ENCODE measurements at regions of chr2 and their contacts with region 1.

Region 1: GRCh38 chr2:162153608-162154224 is 1.7 kb upstream of the GCG start:
- DNase-seq: peak; percentile 67 to 78
- H3K4me3 ChIP-seq: no peak overlapping the region
- H3K4me3 Mint-ChIP-seq: no peak overlapping the region
- H3K27ac Mint-ChIP-seq: no peak overlapping the region
- H3K4me1 ChIP-seq: no peaks in the 10 kb centered on the region
- H3K4me1 Mint-ChIP-seq: no peaks in the 10 kb centered on the region
- H3K27me3 ChIP-seq: no peaks in the 10 kb centered on the region
- H3K27me3 Mint-ChIP-seq: peaks cover 7% of the 10 kb centered on the region
- CTCF ChIP-seq: peak; percentile 75 to 93

Region 2: GRCh38 chr2:161586517-161587167 is 567.1 kb before region 1 on chr2:
- CTCF ChIA-PET with region 1: no interaction called
- POLR2A ChIA-PET with region 1: no interaction called
- intact Hi-C with region 1: loop called (anchors 5 kb)
- DNase-seq: no peak
- H3K4me3 ChIP-seq: no peak overlapping the region
- H3K4me3 Mint-ChIP-seq: no peak overlapping the region
- H3K27ac Mint-ChIP-seq: no peak overlapping the region
- H3K4me1 ChIP-seq: no peaks in the 10 kb centered on the region
- H3K4me1 Mint-ChIP-seq: no peaks in the 10 kb centered on the region
- H3K27me3 ChIP-seq: no peaks in the 10 kb centered on the region
- H3K27me3 Mint-ChIP-seq: peaks cover 7% of the 10 kb centered on the region
- CTCF ChIP-seq: peak; percentile 54 to 66

Region 3: DNA sequence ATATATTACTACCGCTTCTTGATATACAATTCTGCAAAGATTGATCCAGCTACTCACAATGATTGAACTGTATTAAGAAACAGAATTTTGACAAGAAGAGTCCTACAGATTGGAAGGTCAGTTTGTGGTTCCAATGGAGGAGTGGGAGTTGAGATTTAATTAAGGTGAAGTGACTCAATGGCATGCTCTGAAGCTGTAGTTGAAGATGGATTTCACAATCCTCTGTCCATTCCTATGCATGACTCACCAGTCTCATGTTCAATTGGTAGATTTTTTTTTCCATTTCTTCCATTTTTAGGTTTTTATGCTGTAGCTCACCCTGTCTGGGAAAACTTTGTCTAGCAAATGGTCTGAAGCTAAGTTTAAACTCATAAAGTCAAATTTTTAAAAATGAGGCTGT is 163.0 kb before region 1 on chr2:
- CTCF ChIA-PET with region 1: no interaction called
- POLR2A ChIA-PET with region 1: no interaction called
- intact Hi-C with region 1: no loop called
- DNase-seq: peak in 1 of 2 experiments; percentile 14
- H3K4me3 ChIP-seq: no peak overlapping the region
- H3K4me3 Mint-ChIP-seq: no peak overlapping the region
- H3K27ac Mint-ChIP-seq: no peak overlapping the region
- H3K4me1 ChIP-seq: peaks cover 4% of the 10 kb centered on the region
- H3K4me1 Mint-ChIP-seq: peaks cover 4% of the 10 kb centered on the region
- H3K27me3 ChIP-seq: no peaks in the 10 kb centered on the region
- H3K27me3 Mint-ChIP-seq: no peaks in the 10 kb centered on the region
- CTCF ChIP-seq: no peak

Region 4: DNA sequence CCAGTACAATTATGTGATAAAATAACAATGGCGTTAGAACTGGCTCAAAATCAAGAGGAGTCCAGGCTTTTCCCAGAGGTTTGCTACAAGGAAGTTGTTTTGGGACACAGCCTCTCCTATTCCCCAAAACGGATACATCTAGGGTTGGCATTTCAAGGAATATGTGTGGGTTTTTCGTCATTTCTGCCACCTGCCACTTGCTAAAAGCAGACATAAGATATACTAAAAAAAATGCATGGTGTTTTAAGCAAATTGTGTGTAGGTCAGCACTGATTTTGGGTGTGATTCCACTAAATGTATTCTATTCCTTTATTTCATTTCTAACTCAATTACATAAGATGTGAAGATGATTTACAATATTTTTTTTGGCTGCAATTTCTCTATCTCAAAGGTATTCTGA is 34.7 kb after region 1 on chr2:
- CTCF ChIA-PET with region 1: no interaction called
- POLR2A ChIA-PET with region 1: no interaction called
- intact Hi-C with region 1: loop called (anchors 2 kb)
- DNase-seq: no peak
- H3K4me3 ChIP-seq: no peak overlapping the region
- H3K4me3 Mint-ChIP-seq: no peak overlapping the region
- H3K27ac Mint-ChIP-seq: no peak overlapping the region
- H3K4me1 ChIP-seq: peaks cover 3% of the 10 kb centered on the region; the same call in 1 of the 2 replicates
- H3K4me1 Mint-ChIP-seq: no peaks in the 10 kb centered on the region
- H3K27me3 ChIP-seq: no peaks in the 10 kb centered on the region; the same call in 1 of the 2 replicates
- H3K27me3 Mint-ChIP-seq: peaks cover 20% of the 10 kb centered on the region
- CTCF ChIP-seq: no peak

Region 5: GRCh38 chr2:162221064-162221463 is 67.3 kb after region 1 on chr2:
- CTCF ChIA-PET with region 1: no interaction called
- POLR2A ChIA-PET with region 1: no interaction called
- intact Hi-C with region 1: loop called (anchors 1 kb)
- DNase-seq: peak; percentile 61 to 81
- H3K4me3 ChIP-seq: no peak overlapping the region
- H3K4me3 Mint-ChIP-seq: no peak overlapping the region
- H3K27ac Mint-ChIP-seq: no peak overlapping the region
- H3K4me1 ChIP-seq: no peaks in the 10 kb centered on the region
- H3K4me1 Mint-ChIP-seq: no peaks in the 10 kb centered on the region
- H3K27me3 ChIP-seq: no peaks in the 10 kb centered on the region
- H3K27me3 Mint-ChIP-seq: peaks cover 15% of the 10 kb centered on the region
- CTCF ChIP-seq: peak; percentile 91 to 95

Region 6: DNA sequence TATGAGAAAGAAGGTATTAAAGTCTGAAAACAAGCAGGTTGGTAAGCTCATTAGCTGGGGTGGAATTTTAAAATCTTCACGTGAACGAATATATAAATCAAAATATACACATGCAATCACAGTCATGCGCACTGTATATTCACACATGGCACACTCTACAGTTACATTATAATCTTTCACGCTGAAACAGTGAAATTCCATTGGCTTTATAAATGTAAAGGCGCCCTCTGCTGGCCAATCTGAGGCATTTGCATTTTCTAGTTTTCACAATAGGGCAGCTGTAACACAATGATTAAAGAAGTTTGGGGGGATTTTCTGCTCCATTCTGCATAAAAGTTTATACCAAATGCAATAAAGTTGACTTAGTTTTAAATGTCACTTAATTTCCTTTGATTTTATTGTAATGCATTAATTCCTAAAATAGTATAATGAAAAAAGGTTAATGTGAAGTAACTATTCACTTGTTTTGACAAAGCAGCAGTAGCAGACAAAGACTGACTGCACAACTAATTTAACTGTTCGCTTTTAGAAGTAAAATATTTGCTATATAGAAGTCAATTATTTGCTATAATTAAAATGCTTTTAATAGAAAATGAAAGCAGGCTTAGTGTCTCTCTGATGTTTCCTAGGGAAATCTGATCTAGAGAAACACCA is 147.6 kb after region 1 on chr2:
- CTCF ChIA-PET with region 1: interaction called, 16 read pairs
- POLR2A ChIA-PET with region 1: no interaction called
- intact Hi-C with region 1: loop called (anchors 1 kb)
- DNase-seq: peak in 1 of 2 experiments; percentile 42
- H3K4me3 ChIP-seq: no peak overlapping the region
- H3K4me3 Mint-ChIP-seq: no peak overlapping the region
- H3K27ac Mint-ChIP-seq: no peak overlapping the region
- H3K4me1 ChIP-seq: no peaks in the 10 kb centered on the region
- H3K4me1 Mint-ChIP-seq: no peaks in the 10 kb centered on the region
- H3K27me3 ChIP-seq: no peaks in the 10 kb centered on the region
- H3K27me3 Mint-ChIP-seq: peaks cover 3% of the 10 kb centered on the region
- CTCF ChIP-seq: peak; percentile 78 to 83

Region 7: GRCh38 chr2:162422891-162423290 is 269.2 kb after region 1 on chr2:
- CTCF ChIA-PET with region 1: no interaction called
- POLR2A ChIA-PET with region 1: no interaction called
- intact Hi-C with region 1: no loop called
- DNase-seq: no peak
- H3K4me3 ChIP-seq: no peak overlapping the region
- H3K4me3 Mint-ChIP-seq: no peak overlapping the region
- H3K27ac Mint-ChIP-seq: no peak overlapping the region
- H3K4me1 ChIP-seq: no peaks in the 10 kb centered on the region
- H3K4me1 Mint-ChIP-seq: no peaks in the 10 kb centered on the region
- H3K27me3 ChIP-seq: no peaks in the 10 kb centered on the region
- H3K27me3 Mint-ChIP-seq: peaks cover 3% of the 10 kb centered on the region
- CTCF ChIP-seq: no peak